Transverse colon (tissue), 4 donors: ENCODE measurements at regions of chr18 and their contacts with region 1.

Region 1: DNA sequence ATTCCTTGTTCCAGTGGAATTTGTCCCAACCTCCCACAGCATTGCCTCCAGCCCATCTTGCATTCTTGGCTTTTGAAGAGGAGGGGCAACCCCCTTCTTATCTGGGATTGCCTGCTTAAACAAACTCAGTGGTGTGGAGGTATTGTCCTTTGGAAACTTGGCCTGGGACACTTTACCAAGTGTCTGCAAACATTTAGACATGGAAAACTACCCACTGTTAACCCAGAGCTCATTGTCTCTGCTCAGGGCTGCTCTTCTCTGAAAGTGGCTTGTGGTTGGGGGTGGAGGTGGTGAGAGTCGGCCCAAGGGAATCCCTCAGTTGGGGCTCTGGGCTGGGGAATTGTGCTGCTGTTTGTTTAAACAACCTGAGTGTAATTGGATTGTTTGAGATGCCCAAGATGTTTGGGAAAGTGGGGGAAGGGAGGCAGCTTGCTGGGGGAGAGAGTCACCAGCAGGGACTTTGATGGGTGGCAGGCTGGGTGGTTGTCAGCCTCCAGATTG is 178.3 kb upstream of the GATA6 start:
- DNase-seq: no peak
- H3K4me3 ChIP-seq: no peak overlapping the region
- H3K27ac ChIP-seq: no peak overlapping the region
- H3K4me1 ChIP-seq: peaks cover 0 to 3% (median 0%) of the 10 kb centered on the region in 4 donors
- H3K27me3 ChIP-seq: no peaks in the 10 kb centered on the region
- CTCF ChIP-seq: no peak
- EP300 ChIP-seq: no peak
- POLR2A ChIP-seq: no peak

Region 2: GRCh38 chr18:22044474-22045220 is 53.5 kb after region 1 on chr18:
- in situ Hi-C with region 1: no loop called
- intact Hi-C with region 1: loop called (anchors 2 kb)
- DNase-seq: peak; percentile 73
- H3K4me3 ChIP-seq: peak overlapping the region in 1 of 4 donors; percentile 4
- H3K27ac ChIP-seq: peak overlapping the region; percentile 83 to 92 (median 89)
- H3K4me1 ChIP-seq: peaks cover 0 to 49% (median 31%) of the 10 kb centered on the region in 4 donors
- H3K27me3 ChIP-seq: no peaks in the 10 kb centered on the region
- CTCF ChIP-seq: no peak
- EP300 ChIP-seq: no peak
- POLR2A ChIP-seq: peak; percentile 35

Region 3: GRCh38 chr18:22831441-22831904 is 840.3 kb after region 1 on chr18:
- in situ Hi-C with region 1: no loop called
- intact Hi-C with region 1: no loop called
- DNase-seq: peak; percentile 38
- H3K4me3 ChIP-seq: no peak overlapping the region
- H3K27ac ChIP-seq: peak overlapping the region; percentile 51 to 67 (median 55)
- H3K4me1 ChIP-seq: peaks cover 0 to 32% (median 17%) of the 10 kb centered on the region in 4 donors
- H3K27me3 ChIP-seq: no peaks in the 10 kb centered on the region
- CTCF ChIP-seq: no peak
- EP300 ChIP-seq: no peak
- POLR2A ChIP-seq: no peak